ENCODE measurements at regions of chr14 and their contacts with region 1.

Region 1: DNA sequence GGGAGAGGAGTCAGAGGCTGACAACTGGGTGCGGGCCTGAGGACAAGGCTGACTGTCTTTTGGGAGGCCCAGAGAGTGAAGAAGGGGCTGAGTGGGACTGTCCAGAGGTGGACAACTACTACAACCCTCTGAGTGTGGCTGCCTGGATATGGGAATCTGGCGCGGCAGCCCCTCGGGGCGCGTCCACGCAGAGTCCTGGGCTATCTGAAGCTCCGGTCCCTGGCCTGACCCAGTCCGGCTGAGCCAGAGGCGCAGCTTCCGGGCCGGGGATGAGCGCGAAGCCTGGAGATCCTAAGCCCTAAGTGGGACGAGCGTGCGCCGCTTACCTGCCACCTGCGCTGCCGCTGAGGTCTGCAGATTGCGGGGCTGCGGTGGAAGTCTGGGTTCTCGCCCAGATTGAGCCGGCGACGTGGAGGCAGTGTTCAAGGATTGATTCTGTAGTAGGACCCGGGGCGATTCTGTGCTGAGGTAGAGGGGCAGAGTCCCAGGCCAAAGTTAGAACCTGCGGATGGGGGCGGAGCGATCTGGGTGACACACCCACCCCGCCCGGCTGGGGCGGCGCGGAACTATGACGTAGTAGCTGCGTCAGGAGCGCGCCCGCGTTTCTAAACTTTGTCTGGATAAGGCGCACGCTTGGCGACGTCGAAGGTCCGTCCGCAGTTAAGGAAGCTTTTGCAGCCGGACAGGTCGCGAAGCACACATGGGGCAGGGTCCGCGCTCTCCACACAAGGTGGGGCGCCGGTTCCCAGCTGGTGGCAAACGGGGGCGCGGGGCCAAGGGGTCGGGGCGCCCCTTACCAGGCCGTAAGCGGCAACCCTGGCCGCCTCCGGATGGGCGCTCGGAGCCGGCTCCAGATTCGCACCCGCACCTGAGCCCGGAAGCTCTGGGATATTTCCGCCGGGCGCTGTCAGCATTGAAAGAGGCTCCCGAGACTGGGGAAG is at the starts of genes DHRS1 and NOP9:
- DNase-seq: peak; percentile 96
- H3K4me3 Mint-ChIP-seq: peak within 1 kb of the TSS; percentile 90
- H3K27ac Mint-ChIP-seq: peak within 1 kb of the TSS; percentile 84
- H3K4me1 Mint-ChIP-seq: peaks cover 50% of the 10 kb centered on the region
- H3K27me3 Mint-ChIP-seq: no peaks in the 10 kb centered on the region
- total RNA-seq, gene DHRS1: 14.7 to 14.9 TPM
- total RNA-seq, gene NOP9: 30.7 to 30.9 TPM

Region 2: DNA sequence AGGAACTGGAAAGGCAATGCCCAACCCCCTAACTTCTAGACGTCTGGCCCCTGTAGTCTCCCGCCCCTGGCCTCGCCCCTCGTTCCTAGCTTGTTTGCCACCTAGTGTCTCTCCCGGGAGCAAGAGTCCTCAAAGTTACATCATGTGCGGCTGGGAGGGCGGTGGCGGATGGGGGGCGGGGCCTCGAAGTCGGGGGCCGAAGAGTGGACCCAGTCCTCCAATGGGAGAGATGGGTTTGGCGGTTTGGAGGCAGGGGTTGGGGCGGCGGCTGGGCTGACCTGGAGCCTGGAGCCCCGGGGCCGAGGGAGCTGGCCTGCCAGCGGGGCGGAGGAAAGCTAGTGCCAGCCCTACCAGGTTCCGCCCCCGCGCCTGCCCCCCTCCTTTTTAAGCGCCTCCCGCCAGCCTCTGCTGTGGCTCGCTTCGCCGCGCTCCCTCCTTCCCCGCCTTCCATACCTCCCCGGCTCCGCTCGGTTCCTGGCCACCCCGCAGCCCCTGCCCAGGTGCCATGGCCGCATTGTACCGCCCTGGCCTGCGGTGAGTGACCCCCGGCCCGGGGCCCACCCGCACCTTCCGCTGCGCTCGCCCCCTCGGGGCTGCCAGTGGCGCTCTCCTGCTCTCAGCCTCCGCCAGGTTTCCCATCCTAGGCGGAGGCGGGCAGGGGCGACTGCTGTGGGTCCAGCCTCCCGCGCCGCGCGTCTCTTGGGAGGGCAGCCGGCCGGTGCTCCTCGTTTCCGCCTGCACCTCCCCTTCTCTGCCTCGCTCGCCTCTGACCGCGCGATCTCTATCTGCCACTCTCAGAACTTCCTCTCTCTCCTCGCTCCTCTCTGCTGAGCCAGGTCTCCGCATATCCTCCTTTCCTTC is 205.4 kb before region 1 on chr14 and contains the start of gene PCK2:
- CTCF ChIA-PET with region 1: interaction called, 3 read pairs
- POLR2A ChIA-PET with region 1: no interaction called
- intact Hi-C with region 1: loop called (anchors 5 kb)
- DNase-seq: peak; percentile 94
- H3K4me3 Mint-ChIP-seq: peak within 1 kb of the TSS; percentile 94
- H3K27ac Mint-ChIP-seq: peak within 1 kb of the TSS; percentile 97
- H3K4me1 Mint-ChIP-seq: peaks cover 28% of the 10 kb centered on the region
- H3K27me3 Mint-ChIP-seq: no peaks in the 10 kb centered on the region
- total RNA-seq, gene PCK2: 118 to 125 TPM

Region 3: GRCh38 chr14:24188251-24189058 is 111.1 kb before region 1 on chr14 and contains the start of gene IPO4:
- CTCF ChIA-PET with region 1: interaction called, 4 read pairs
- POLR2A ChIA-PET with region 1: interaction called, 10 read pairs
- intact Hi-C with region 1: loop called (anchors 1 kb)
- DNase-seq: peak; percentile 97
- H3K4me3 Mint-ChIP-seq: peak within 1 kb of the TSS; percentile 89
- H3K27ac Mint-ChIP-seq: peak within 1 kb of the TSS; percentile 74
- H3K4me1 Mint-ChIP-seq: peaks cover 40% of the 10 kb centered on the region
- H3K27me3 Mint-ChIP-seq: no peaks in the 10 kb centered on the region
- total RNA-seq, gene IPO4: 69.5 to 72.6 TPM

Region 4: GRCh38 chr14:24241829-24242443 is 57.6 kb before region 1 on chr14:
- CTCF ChIA-PET with region 1: interaction called, 224 read pairs
- POLR2A ChIA-PET with region 1: interaction called, 53 read pairs
- intact Hi-C with region 1: loop called (anchors 1 kb)
- DNase-seq: peak; percentile 94
- H3K4me3 Mint-ChIP-seq: peak overlapping the region; percentile 84
- H3K27ac Mint-ChIP-seq: peak overlapping the region; percentile 96
- H3K4me1 Mint-ChIP-seq: peaks cover 59% of the 10 kb centered on the region
- H3K27me3 Mint-ChIP-seq: no peaks in the 10 kb centered on the region

Region 5: GRCh38 chr14:24271134-24271833 is 28.2 kb before region 1 on chr14 and contains the start of gene RABGGTA:
- CTCF ChIA-PET with region 1: interaction called, 30 read pairs
- POLR2A ChIA-PET with region 1: interaction called, 15 read pairs
- intact Hi-C with region 1: loop called (anchors 1 kb)
- DNase-seq: peak; percentile 93
- H3K4me3 Mint-ChIP-seq: peak within 1 kb of the TSS; percentile 84
- H3K27ac Mint-ChIP-seq: peak within 1 kb of the TSS; percentile 94
- H3K4me1 Mint-ChIP-seq: peaks cover 42% of the 10 kb centered on the region
- H3K27me3 Mint-ChIP-seq: no peaks in the 10 kb centered on the region
- total RNA-seq, gene RABGGTA: 39.5 to 40.6 TPM

Region 6: GRCh38 chr14:24310646-24311604 is 11.4 kb after region 1 on chr14 and contains the start of gene LTB4R:
- CTCF ChIA-PET with region 1: interaction called, 126 read pairs
- POLR2A ChIA-PET with region 1: interaction called, 11 read pairs
- intact Hi-C with region 1: loop called (anchors 1 kb)
- DNase-seq: peak; percentile 81
- H3K4me3 Mint-ChIP-seq: peak within 1 kb of the TSS; percentile 79
- H3K27ac Mint-ChIP-seq: peak within 1 kb of the TSS; percentile 84
- H3K4me1 Mint-ChIP-seq: peaks cover 69% of the 10 kb centered on the region
- H3K27me3 Mint-ChIP-seq: no peaks in the 10 kb centered on the region
- total RNA-seq, gene LTB4R: 15.4 to 16.7 TPM

Measured in activated CD4-positive, alpha-beta memory T cell treated with anti-CD3 and anti-CD28 coated beads for 36 hours (primary cell).